AG04450 (cell line): ENCODE measurements at regions of chr1 and their contacts with region 1.

Region 1: GRCh38 chr1:24744911-24745710 is at the start of gene CLIC4:
- DNase-seq: peak; percentile 99
- H3K4me3 ChIP-seq: peak within 1 kb of the TSS; percentile 93
- H3K27ac ChIP-seq: peak within 1 kb of the TSS; percentile 92
- H3K27me3 ChIP-seq: no peaks in the 10 kb centered on the region
- CTCF ChIP-seq: peak; percentile 37; the same call in 1 of the 2 replicates
- polyA plus RNA-seq, gene CLIC4: 412 and 561 TPM in 2 replicates

Region 2: DNA sequence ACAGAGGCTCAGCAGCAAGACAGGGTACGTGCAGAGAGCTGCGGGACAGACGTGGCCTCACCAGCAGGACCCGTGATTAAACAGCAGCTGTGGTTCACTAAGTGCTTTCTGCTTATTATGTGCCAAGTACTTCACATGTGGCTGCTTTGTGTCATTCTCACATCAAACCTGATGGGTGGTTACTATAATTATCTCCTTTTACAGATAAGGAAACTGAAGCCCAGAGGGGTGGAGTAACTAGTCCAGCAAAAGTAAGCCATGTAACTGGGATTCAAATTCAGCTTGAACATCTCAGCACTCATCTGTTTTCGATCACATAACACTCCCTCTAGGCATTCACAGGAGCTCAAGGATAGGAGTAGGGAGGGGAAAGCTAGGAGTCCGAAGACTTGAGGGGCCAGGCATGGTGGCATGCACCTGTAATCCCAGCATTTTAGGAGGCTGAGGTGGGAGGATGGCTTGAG is 50.7 kb before region 1 on chr1:
- CTCF ChIA-PET with region 1: interaction called, 14 read pairs
- POLR2A ChIA-PET with region 1: interaction called, 27 read pairs
- DNase-seq: no peak
- H3K4me3 ChIP-seq: no peak overlapping the region
- H3K27ac ChIP-seq: peak overlapping the region; percentile 49
- H3K27me3 ChIP-seq: no peaks in the 10 kb centered on the region
- CTCF ChIP-seq: no peak

Region 3: DNA sequence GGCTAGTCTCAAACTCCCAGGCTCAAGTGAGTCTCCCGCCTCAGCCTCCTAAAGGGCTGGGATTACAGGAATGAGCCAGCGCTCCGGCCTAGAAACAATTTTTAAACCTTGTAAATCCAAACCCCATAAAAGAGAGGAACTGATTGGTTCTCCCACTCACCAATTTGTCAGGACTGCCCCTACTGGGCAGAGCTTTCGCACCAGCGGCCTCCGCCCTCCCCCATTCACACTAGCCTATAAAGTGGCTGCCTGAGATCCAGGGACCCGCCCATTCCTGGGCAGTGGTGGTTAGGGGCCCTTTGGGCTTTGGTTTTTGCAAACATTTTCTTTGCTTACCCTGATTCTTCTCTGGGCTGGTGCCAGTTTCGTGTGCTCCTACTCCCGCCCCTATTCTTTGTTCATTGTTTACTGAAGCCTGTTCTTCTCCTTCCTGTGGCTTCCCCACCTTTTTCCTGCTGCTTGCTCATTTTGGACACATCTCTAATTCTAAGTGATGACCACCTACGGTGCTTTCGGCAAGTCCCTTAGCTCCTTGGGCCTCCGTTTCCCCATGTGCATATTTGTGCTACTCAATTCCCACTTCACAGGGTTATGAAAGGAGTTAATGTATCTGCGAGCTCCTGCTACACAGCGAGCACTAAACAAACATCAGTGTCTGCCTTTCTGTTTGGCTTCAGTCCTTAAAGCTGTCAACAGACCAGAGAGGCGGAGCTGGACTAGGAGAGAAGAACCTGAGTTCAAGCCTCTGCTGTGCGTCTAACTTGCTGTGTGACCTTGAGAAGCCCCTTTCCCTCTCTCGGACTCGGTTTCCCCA is 39.6 kb before region 1 on chr1:
- CTCF ChIA-PET with region 1: interaction called, 4 read pairs
- POLR2A ChIA-PET with region 1: interaction called, 15 read pairs
- DNase-seq: peak; percentile 87
- H3K4me3 ChIP-seq: peak overlapping the region; percentile 1
- H3K27ac ChIP-seq: peak overlapping the region; percentile 71
- H3K27me3 ChIP-seq: no peaks in the 10 kb centered on the region
- CTCF ChIP-seq: no peak

Region 4: DNA sequence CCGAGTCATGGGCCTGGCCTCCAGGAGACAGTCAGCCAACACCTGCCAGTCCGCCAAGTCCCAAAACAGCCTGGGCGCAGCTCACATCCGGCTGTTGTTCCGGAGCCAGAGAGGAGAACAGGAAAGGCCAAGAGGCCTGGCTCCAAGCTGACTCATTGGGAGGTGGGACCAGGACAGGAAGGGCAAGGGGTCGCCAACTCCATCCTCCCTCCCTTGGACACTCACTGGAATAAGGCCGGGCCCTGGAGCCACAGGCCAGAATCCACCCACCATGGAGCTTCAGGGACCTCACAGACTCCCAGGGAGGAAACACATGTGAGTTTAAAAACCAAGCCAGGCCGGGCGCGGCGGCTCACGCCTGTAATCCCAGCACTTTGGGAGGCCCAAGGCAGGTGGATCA is 25.0 kb before region 1 on chr1:
- CTCF ChIA-PET with region 1: no interaction called
- POLR2A ChIA-PET with region 1: interaction called, 35 read pairs
- DNase-seq: no peak
- H3K4me3 ChIP-seq: no peak overlapping the region
- H3K27ac ChIP-seq: peak overlapping the region; percentile 25
- H3K27me3 ChIP-seq: no peaks in the 10 kb centered on the region
- CTCF ChIP-seq: no peak

Region 5: GRCh38 chr1:24727501-24728216 is 17.5 kb before region 1 on chr1:
- CTCF ChIA-PET with region 1: interaction called, 6 read pairs
- POLR2A ChIA-PET with region 1: interaction called, 35 read pairs
- DNase-seq: no peak
- H3K4me3 ChIP-seq: peak overlapping the region; percentile 31; the same call in 1 of the 2 replicates
- H3K27ac ChIP-seq: peak overlapping the region; percentile 68
- H3K27me3 ChIP-seq: no peaks in the 10 kb centered on the region
- CTCF ChIP-seq: no peak

Region 6: GRCh38 chr1:24769656-24770651 is 24.8 kb after region 1 on chr1:
- CTCF ChIA-PET with region 1: interaction called, 6 read pairs
- POLR2A ChIA-PET with region 1: interaction called, 14 read pairs
- DNase-seq: peak; percentile 92
- H3K4me3 ChIP-seq: no peak overlapping the region
- H3K27ac ChIP-seq: peak overlapping the region; percentile 97
- H3K27me3 ChIP-seq: no peaks in the 10 kb centered on the region
- CTCF ChIP-seq: no peak

Region 7: GRCh38 chr1:24830680-24831272 is 85.7 kb after region 1 on chr1:
- CTCF ChIA-PET with region 1: interaction called, 11 read pairs
- POLR2A ChIA-PET with region 1: interaction called, 10 read pairs
- DNase-seq: peak; percentile 36
- H3K4me3 ChIP-seq: no peak overlapping the region
- H3K27ac ChIP-seq: no peak overlapping the region
- H3K27me3 ChIP-seq: no peaks in the 10 kb centered on the region
- CTCF ChIP-seq: peak; percentile 84

Region 8: DNA sequence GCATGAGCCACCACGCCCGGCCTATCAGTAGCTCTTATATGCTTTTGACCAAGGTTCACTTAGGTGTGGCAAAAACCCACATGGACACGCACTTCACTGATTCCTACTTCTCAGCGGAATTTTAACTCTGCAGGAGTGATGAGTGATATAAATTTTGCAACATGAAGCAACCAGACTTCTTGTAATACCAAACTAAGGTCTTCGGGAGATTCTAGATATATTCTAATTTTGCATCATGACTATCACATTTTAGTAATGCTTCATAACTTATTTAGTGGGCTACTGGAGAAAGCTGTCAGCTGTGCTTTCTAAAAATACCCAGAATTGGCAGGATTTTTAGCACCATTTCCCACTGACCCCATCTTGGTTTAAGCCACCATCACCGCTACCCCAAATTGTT is 647.7 kb after region 1 on chr1:
- CTCF ChIA-PET with region 1: no interaction called
- POLR2A ChIA-PET with region 1: no interaction called
- DNase-seq: no peak
- H3K4me3 ChIP-seq: no peak overlapping the region
- H3K27ac ChIP-seq: no peak overlapping the region
- H3K27me3 ChIP-seq: no peaks in the 10 kb centered on the region
- CTCF ChIP-seq: no peak